ENCODE measurements at regions of chr12 and their contacts with region 1.

Region 1: DNA sequence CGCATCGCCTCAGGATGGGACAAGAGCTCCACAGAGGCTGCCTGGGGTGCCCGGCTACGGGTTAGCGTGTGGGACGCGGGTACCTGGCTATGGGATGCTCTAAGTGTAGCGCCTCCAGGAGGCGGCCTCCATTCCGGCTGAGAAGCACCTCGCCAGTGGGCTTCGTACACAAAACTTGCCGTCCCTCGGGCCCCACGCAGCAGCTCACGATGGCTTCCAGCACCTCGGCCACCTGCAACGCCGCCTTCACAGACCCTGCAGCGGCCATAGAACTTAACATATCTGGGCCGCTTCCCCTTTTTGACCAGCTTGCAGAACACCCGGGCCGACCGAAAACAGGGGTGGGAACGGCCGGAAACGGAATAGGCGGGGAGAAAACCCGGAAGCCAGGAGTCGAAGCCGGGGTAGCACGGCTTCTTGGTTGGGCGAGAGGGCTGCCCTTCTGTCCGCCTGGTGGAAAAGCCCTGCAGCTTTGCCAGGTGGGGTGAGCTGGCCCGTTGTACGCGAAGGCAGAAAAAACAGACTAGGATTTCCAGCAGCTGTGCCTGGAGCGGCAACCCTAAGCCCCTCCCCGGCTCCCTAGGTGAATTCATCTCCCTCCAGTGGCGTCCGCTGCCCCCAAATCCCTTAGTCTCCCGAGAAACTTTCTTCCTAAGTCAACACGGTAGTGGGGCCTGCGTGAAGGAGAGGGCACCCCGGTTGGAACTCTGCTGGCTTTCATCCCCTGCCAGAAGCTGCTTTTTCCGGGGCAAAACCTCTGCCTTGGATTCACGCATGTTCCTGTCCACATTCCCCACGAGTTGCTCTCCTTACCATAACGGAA is at the start of gene BBS10:
- DNase-seq: peak; percentile 96
- ATAC-seq: peak; percentile 98
- total RNA-seq, gene BBS10: 8.6 TPM

Region 2: GRCh38 chr12:75511116-75512048 is 836.9 kb before region 1 on chr12 and contains the start of gene KRR1:
- intact Hi-C with region 1: loop called (anchors 10 kb)
- DNase-seq: peak; percentile 92
- ATAC-seq: peak; percentile 99
- total RNA-seq, gene KRR1: 31.1 TPM

Region 3: GRCh38 chr12:76030341-76031080 is 317.8 kb before region 1 on chr12:
- intact Hi-C with region 1: no loop called
- DNase-seq: peak; percentile 73
- ATAC-seq: peak; percentile 7

Region 4: DNA sequence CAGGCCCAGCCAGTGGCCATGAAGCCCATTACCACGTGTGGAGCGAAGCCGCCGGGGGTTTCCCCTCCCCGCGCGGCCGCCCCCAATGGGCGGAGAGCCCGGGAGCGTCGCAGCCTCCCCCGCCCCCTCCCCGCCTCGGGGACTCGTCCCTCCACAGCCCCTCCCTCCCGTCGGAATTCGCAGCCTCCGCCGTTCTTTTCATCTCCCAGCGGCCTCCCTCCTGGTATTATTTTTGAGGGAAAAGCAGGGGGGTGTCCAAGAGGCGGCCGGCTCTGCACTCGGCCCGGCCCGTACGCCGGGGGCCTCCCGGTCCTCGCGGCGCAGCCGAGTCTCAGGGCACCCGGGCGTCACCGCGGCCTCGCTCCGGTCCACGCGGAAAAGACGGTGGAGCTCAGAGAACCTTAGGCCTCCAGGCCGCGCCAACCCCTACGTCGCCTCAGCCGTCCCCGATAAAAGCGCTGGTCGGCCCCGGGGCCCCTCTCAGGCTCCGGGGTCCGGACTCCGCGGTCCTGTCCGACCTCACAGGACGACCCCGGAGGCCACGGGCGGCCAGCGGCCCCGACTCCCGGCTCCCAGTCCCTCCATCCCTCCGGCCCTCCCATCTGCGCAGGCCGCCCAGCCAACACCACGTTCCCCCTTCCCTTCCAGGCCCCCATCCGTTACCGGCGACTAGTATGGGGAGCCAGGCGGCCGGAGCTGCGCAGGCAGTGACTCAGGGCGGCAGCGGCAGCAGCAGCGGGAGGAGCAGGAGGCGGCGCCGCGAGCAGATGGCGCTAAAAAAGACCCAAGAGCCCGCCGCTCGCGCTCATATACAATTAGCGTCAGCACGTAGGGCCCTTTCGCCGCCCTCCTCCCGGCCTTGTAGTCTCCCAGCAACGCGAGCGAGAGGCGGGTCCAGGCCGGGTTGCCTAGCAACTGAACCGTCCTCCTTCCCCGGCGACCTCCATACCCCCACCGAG is 264.1 kb before region 1 on chr12 and contains the start of gene NAP1L1:
- intact Hi-C with region 1: loop called (anchors 2 kb)
- DNase-seq: peak; percentile 99
- ATAC-seq: peak; percentile 97
- total RNA-seq, gene NAP1L1: 267 TPM

Region 5: DNA sequence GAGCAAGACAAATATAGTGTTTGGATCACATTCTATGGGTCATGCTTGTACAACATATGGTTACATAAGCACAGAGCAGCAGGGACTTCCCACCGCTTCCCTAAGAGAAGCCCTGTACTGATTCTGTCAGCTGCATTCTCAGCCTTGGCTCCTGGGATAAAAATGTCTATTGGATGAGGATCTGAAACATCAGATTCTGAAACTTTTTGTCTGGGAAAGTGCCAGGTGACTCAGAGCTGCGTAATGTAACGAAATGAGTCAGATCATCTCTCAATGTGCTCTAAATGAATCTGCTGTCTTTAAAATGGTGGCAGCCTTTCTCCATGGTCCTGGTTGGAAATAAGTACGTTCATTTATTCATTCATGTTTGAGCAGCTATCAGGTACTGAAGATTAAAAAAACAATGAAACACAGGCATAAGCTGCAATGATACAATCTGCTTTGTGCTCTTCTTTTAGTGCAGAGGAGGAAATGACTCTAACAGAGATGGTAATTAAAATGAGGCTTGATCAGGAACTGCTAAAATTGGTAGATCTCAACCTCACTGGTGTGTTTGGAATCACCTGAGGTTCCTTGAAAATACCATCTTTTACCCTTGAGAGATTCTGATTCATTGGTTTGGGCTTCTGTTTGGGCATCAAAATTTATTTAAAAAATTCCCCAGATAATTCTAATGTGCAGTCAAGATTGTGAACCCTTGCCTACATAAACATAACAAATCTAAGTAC is 164.7 kb before region 1 on chr12:
- intact Hi-C with region 1: no loop called
- DNase-seq: no peak
- ATAC-seq: no peak

Region 6: DNA sequence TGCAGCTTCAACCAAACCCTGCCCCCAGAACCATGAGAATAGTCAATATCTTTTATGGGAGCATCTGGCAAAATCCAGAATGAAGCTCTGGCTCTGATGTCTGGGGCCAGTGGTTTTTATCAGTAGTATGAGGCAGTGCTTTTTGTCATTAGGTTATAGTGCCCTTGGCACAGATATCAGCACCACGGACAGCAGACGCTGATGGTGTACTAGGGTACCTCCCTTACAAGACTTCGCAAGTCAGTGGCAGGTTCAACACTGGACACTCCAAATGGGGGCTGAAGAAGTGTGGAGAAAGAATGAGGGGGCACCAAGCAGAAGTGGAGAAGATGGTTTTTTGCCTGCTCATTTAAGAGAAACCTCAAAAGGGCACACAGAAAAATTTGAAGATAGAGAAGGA is 785.3 kb after region 1 on chr12:
- intact Hi-C with region 1: no loop called
- DNase-seq: no peak
- ATAC-seq: no peak

Measured in Right ventricle myocardium inferior (tissue), 1 donor.